Activated naive CD4-positive, alpha-beta T cell treated with anti-CD3 and anti-CD28 coated beads for 36 hours (primary cell): ENCODE measurements at regions of chr6 and their contacts with region 1.

Region 1: GRCh38 chr6:24933868-24934401 is 1.8 kb downstream of the RIPOR2 start:
- DNase-seq: peak; percentile 67
- H3K4me3 Mint-ChIP-seq: peak overlapping the region; percentile 96
- H3K27ac Mint-ChIP-seq: peak overlapping the region; percentile 96
- H3K4me1 Mint-ChIP-seq: peaks cover 73% of the 10 kb centered on the region
- H3K27me3 Mint-ChIP-seq: no peaks in the 10 kb centered on the region

Region 2: GRCh38 chr6:24666641-24667377 is 267.1 kb before region 1 on chr6 and contains the starts of genes ACOT13 and TDP2:
- CTCF ChIA-PET with region 1: no interaction called
- intact Hi-C with region 1: no loop called
- DNase-seq: peak; percentile 97
- H3K4me3 Mint-ChIP-seq: peak within 1 kb of the TSS; percentile 90
- H3K27ac Mint-ChIP-seq: peak within 1 kb of the TSS; percentile 95
- H3K4me1 Mint-ChIP-seq: peaks cover 35% of the 10 kb centered on the region
- H3K27me3 Mint-ChIP-seq: no peaks in the 10 kb centered on the region
- total RNA-seq, gene ACOT13: 34.0 to 36.1 TPM
- total RNA-seq, gene TDP2: 41.5 to 44.2 TPM

Region 3: DNA sequence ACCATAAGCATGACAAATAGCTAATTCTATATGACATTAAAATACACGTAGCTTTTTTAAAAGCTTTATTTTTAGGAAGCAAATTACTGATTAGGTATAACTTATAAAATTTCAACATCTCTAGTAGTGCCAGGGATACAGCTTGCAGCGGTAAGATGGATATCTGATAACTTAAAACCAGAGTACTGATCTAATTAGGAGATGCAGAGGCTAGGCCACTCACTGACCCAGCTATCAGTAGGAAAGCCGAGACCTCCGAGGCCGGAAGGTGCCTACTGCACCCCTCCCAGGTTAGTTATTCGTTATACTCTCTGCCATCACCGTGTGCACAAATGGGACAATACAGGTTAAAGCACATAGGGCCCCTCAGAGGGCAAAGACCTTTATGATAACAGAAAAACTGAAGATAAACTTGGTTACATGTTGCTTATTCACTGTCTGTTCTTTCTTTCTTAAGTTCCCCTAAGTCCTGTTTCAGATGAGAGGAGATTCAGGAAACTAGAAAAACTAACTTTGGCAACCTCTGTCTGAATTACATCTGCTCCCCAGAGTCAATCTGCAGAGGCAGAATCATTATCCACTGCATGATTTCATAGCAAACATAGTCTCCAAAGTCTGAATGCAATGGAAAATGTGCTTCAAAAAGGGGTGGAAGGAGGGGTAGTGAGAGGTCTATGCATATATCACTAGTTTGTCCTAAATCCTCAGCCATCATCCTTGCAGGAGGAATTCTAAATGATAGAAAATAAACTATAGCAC is 59.0 kb before region 1 on chr6:
- CTCF ChIA-PET with region 1: interaction called, 12 read pairs
- intact Hi-C with region 1: no loop called
- DNase-seq: no peak
- H3K4me3 Mint-ChIP-seq: no peak overlapping the region
- H3K27ac Mint-ChIP-seq: no peak overlapping the region
- H3K4me1 Mint-ChIP-seq: peaks cover 69% of the 10 kb centered on the region
- H3K27me3 Mint-ChIP-seq: no peaks in the 10 kb centered on the region

Region 4: GRCh38 chr6:24910961-24911712 is 22.8 kb before region 1 on chr6:
- CTCF ChIA-PET with region 1: interaction called, 129 read pairs
- intact Hi-C with region 1: loop called (anchors 1 kb)
- DNase-seq: peak; percentile 70
- H3K4me3 Mint-ChIP-seq: peak overlapping the region; percentile 92
- H3K27ac Mint-ChIP-seq: peak overlapping the region; percentile 96
- H3K4me1 Mint-ChIP-seq: peaks cover 76% of the 10 kb centered on the region
- H3K27me3 Mint-ChIP-seq: no peaks in the 10 kb centered on the region

Region 5: DNA sequence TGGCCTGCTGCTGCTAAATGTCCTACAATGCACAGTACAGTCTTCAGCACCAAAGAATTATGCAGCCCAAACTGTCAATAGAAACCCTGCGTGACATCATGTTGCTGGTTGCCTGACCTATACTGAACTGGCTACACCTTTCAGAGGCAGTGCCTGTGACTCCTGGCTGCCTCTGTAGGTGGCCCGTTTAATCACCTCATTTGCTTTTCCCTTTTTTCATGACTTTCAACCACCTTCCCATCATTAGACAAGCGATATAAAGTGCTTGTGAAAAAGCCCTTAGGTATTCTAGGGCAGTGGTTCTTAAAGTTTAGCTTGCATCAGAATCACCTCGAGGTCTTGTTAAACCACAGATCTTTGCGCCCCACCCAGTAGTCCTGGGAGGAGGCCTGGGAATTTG is 34.9 kb after region 1 on chr6:
- CTCF ChIA-PET with region 1: interaction called, 29 read pairs
- intact Hi-C with region 1: no loop called
- DNase-seq: no peak
- H3K4me3 Mint-ChIP-seq: no peak overlapping the region
- H3K27ac Mint-ChIP-seq: no peak overlapping the region
- H3K4me1 Mint-ChIP-seq: peaks cover 59% of the 10 kb centered on the region
- H3K27me3 Mint-ChIP-seq: no peaks in the 10 kb centered on the region

Region 6: DNA sequence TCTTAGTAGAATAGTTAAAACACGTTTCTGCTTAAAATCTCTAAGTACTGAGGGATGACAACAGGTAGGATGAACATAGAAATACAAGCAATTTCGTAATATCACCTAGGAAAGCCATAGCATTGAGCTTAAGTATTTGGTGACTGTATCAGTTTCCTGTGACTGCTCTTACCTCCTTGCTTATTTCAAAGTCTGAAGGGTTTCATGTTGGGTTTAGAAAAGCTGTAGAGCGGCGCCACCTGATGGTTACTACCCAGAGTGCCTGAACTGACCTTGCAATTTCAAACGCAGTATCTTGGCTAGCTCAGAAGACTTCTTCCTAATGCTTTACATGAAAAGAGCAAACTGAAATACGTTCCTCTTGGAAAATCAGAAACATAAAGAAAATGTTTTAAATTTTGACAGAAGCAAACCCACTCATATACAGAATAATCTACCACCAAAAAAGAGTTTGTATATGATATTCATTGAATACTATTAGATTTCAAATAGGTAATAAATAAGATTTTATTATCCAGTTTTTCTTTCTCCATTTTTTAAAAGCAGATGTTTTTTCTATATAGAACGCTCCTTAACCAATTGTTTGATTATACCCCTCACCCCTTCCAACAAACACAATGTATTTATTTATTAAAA is 84.1 kb after region 1 on chr6:
- CTCF ChIA-PET with region 1: interaction called, 70 read pairs
- intact Hi-C with region 1: loop called (anchors 1 kb)
- DNase-seq: peak; percentile 93
- H3K4me3 Mint-ChIP-seq: peak overlapping the region; percentile 6
- H3K27ac Mint-ChIP-seq: peak overlapping the region; percentile 84
- H3K4me1 Mint-ChIP-seq: peaks cover 55% of the 10 kb centered on the region
- H3K27me3 Mint-ChIP-seq: no peaks in the 10 kb centered on the region

Region 7: DNA sequence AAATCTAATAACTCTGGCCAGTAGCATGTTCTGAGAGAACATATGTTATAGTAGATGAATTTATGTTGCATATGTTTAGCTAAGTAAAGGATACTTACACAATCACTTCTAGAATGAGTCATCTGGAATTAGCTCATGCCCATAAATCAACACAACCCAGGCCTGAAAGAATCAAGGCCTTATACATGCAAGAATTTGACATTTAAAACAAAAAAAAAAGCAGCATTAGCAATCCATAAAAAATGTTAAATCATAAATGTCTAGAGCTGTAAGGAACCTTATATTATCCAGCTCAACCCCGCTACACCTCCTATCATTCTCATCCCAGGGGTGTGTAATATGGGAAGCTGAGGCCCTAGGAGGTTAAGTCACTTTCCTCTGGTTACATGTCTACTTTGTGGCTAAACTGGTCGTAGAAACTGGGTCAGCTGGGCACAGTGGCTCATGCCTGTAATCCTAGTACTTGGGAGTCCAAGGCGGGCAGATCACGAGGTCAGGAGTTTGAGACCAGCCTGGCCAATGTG is 240.1 kb after region 1 on chr6:
- CTCF ChIA-PET with region 1: no interaction called
- intact Hi-C with region 1: loop called (anchors 10 kb)
- DNase-seq: no peak
- H3K4me3 Mint-ChIP-seq: no peak overlapping the region
- H3K27ac Mint-ChIP-seq: no peak overlapping the region
- H3K4me1 Mint-ChIP-seq: peaks cover 45% of the 10 kb centered on the region
- H3K27me3 Mint-ChIP-seq: no peaks in the 10 kb centered on the region